ENCODE measurements at regions of chr20 and their contacts with region 1.

Region 1: DNA sequence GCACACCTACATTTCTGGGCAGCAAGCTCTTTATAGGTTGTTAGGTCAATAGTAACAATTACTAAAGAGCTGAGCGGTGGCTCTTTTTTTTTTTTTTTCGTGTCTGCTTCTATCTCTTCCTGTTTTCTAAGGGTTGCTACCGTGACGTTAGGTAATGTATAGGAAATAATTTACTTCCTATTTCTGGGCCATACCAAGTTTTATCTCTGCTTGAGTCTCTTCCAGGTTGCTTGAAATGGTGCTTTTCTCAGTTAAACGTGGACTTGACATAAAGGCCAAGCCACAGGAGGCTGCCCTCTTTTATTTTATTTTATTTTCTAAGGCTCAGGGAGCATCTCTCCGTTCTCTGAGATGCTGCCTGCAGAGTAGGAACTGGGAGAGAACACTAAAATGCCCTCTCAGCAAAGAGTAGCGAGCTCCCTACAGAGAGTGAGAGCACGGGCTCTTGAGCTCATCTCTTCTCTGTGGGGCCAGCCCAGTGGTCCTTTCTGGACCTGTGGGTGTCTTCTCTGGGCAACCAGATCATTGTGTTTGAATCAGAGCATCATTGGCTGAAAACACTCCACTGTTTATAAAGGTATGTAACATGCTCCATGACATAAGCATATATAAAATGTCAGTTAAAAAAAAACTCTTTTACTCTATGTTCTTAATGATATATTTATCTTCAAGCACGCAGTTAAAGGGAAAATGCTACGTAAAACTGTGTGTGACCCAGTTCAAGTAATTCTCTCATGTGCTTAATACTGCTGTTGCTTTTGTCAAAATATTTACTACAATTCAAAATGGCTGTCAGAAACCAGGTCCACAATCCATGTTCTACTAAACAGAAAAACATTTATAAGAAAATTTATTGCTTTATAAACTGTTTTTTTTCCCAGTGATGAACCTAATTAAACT is at the start of gene ZNF831:
- DNase-seq: no peak
- ATAC-seq: no peak
- H3K4me3 ChIP-seq: no peak within 1 kb of the TSS
- H3K27ac ChIP-seq: no peak within 1 kb of the TSS
- H3K4me1 ChIP-seq: no peaks in the 10 kb centered on the region
- H3K27me3 ChIP-seq: peaks cover 12% of the 10 kb centered on the region; the same call in 1 of the 2 replicates
- CTCF ChIP-seq: no peak
- total RNA-seq, gene ZNF831: 0.03 TPM

Region 2: DNA sequence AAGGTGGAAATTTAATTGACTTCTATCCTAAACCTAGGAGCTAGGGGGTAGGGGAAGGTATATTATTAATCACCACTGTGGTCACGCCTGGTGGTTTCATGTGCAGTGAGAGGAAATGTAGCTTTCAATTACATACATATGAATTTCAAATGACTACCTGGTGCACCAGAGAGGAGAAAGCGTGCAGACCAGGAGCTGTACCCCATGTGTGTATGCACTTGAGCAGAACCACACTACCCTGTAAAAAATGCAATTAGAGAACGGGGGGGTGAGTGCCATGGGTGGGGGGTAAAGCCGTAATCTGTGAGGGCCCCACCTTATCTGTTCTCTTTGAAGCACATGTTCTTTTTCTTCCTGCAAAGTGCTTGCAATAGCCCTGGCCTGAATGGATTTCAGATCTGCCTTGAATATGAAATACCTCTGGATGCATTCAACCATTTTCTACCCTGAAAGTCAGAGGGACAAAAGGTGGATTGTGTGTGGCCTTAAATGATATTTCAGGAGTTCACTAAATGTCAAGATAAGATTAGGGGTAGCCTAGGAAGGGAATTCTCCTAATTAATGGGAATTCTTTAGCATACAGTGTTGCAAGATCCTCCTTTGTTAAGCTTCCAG is 105.6 kb after region 1 on chr20:
- CTCF ChIA-PET with region 1: interaction called, 16 read pairs
- POLR2A ChIA-PET with region 1: no interaction called
- in situ Hi-C with region 1: no loop called
- intact Hi-C with region 1: no loop called
- DNase-seq: no peak
- ATAC-seq: no peak
- H3K4me3 ChIP-seq: no peak overlapping the region
- H3K27ac ChIP-seq: no peak overlapping the region
- H3K4me1 ChIP-seq: no peaks in the 10 kb centered on the region
- H3K27me3 ChIP-seq: peaks cover 29% of the 10 kb centered on the region
- CTCF ChIP-seq: no peak

Measured in Panc1 (cell line).